T-cell (primary cell): ENCODE measurements at regions of chr1 and their contacts with region 1.

Region 1: DNA sequence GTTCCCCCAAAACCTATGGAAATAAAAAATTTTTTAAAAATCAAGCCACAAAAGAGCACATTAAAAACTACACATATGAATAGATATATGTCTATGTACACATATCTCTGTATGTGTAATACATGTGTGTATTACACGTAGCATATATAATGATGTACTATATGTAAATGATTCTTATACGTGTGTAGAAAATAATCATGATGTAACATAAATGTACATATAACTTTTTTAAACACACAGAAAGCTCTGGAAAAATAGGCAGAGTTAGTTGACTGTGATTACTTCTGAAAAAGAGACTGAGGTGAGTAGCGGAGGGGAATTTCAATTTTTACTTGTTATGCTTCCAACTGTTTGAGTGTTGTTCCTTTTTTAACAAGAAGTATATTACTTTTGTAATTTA is 405.0 kb downstream of the CAMTA1 start:
- DNase-seq: no peak
- ATAC-seq: no peak
- H3K4me3 ChIP-seq: no peak overlapping the region
- H3K4me3 Mint-ChIP-seq: no peak overlapping the region
- H3K27ac ChIP-seq: no peak overlapping the region
- H3K27ac Mint-ChIP-seq: no peak overlapping the region
- H3K4me1 ChIP-seq: no peaks in the 10 kb centered on the region
- H3K4me1 Mint-ChIP-seq: no peaks in the 10 kb centered on the region
- H3K27me3 ChIP-seq: peaks cover 0 to 3% of the 10 kb centered on the region in 2 experiments
- H3K27me3 Mint-ChIP-seq: peaks cover 9 to 13% of the 10 kb centered on the region in 2 donors

Region 2: GRCh38 chr1:7042322-7043190 is 147.7 kb before region 1 on chr1:
- CTCF ChIA-PET with region 1: interaction called in 1 of 2 experiments, 10 read pairs
- POLR2A ChIA-PET with region 1: no interaction called
- DNase-seq: peak in 1 of 35 experiments; percentile 30
- ATAC-seq: no peak
- H3K4me3 ChIP-seq: no peak overlapping the region
- H3K4me3 Mint-ChIP-seq: no peak overlapping the region
- H3K27ac ChIP-seq: no peak overlapping the region
- H3K27ac Mint-ChIP-seq: no peak overlapping the region
- H3K4me1 ChIP-seq: no peaks in the 10 kb centered on the region
- H3K4me1 Mint-ChIP-seq: no peaks in the 10 kb centered on the region
- H3K27me3 ChIP-seq: peaks cover 0 to 24% of the 10 kb centered on the region in 2 experiments
- H3K27me3 Mint-ChIP-seq: peaks cover 9 to 17% of the 10 kb centered on the region in 2 donors

Region 3: GRCh38 chr1:7616076-7616832 is 426.0 kb after region 1 on chr1:
- CTCF ChIA-PET with region 1: no interaction called
- POLR2A ChIA-PET with region 1: no interaction called
- DNase-seq: peak in 12 of 35 experiments; percentile 1 to 23 (median 12)
- ATAC-seq: no peak
- H3K4me3 ChIP-seq: no peak overlapping the region
- H3K4me3 Mint-ChIP-seq: no peak overlapping the region
- H3K27ac ChIP-seq: no peak overlapping the region
- H3K27ac Mint-ChIP-seq: no peak overlapping the region
- H3K4me1 ChIP-seq: no peaks in the 10 kb centered on the region
- H3K4me1 Mint-ChIP-seq: no peaks in the 10 kb centered on the region
- H3K27me3 ChIP-seq: peaks cover 0 to 35% of the 10 kb centered on the region in 2 experiments
- H3K27me3 Mint-ChIP-seq: peaks cover 27 to 32% of the 10 kb centered on the region in 2 donors